ENCODE measurements at regions of chr11 and their contacts with region 1.

Region 1: GRCh38 chr11:86302100-86302793 is at the start of gene HIKESHI:
- DNase-seq: peak; percentile 97
- ATAC-seq: peak; percentile 99
- H3K4me3 Mint-ChIP-seq: peak within 1 kb of the TSS; percentile 96
- H3K27ac Mint-ChIP-seq: peak within 1 kb of the TSS; percentile 99
- H3K4me1 Mint-ChIP-seq: peaks cover 31% of the 10 kb centered on the region
- H3K27me3 Mint-ChIP-seq: no peaks in the 10 kb centered on the region
- total RNA-seq, gene HIKESHI: 50.2 to 51.3 TPM

Region 2: GRCh38 chr11:86255896-86256295 is 46.4 kb before region 1 on chr11:
- CTCF ChIA-PET with region 1: interaction called, 3 read pairs
- POLR2A ChIA-PET with region 1: interaction called, 13 read pairs
- intact Hi-C with region 1: no loop called
- DNase-seq: no peak
- ATAC-seq: peak; percentile 54
- H3K4me3 Mint-ChIP-seq: no peak overlapping the region
- H3K27ac Mint-ChIP-seq: peak overlapping the region; percentile 72
- H3K4me1 Mint-ChIP-seq: peaks cover 53% of the 10 kb centered on the region
- H3K27me3 Mint-ChIP-seq: no peaks in the 10 kb centered on the region

Region 3: GRCh38 chr11:87529486-87529885 is 1227.2 kb after region 1 on chr11:
- CTCF ChIA-PET with region 1: no interaction called
- POLR2A ChIA-PET with region 1: no interaction called
- intact Hi-C with region 1: no loop called
- DNase-seq: no peak
- ATAC-seq: no peak
- H3K4me3 Mint-ChIP-seq: no peak overlapping the region
- H3K27ac Mint-ChIP-seq: no peak overlapping the region
- H3K4me1 Mint-ChIP-seq: no peaks in the 10 kb centered on the region
- H3K27me3 Mint-ChIP-seq: no peaks in the 10 kb centered on the region

Measured in activated CD4-positive, alpha-beta T cell treated with anti-CD3 and anti-CD28 coated beads for 36 hours (primary cell).